Vagina (tissue), 2 donors: ENCODE measurements at regions of chr17 and their contacts with region 1.

Region 1: DNA sequence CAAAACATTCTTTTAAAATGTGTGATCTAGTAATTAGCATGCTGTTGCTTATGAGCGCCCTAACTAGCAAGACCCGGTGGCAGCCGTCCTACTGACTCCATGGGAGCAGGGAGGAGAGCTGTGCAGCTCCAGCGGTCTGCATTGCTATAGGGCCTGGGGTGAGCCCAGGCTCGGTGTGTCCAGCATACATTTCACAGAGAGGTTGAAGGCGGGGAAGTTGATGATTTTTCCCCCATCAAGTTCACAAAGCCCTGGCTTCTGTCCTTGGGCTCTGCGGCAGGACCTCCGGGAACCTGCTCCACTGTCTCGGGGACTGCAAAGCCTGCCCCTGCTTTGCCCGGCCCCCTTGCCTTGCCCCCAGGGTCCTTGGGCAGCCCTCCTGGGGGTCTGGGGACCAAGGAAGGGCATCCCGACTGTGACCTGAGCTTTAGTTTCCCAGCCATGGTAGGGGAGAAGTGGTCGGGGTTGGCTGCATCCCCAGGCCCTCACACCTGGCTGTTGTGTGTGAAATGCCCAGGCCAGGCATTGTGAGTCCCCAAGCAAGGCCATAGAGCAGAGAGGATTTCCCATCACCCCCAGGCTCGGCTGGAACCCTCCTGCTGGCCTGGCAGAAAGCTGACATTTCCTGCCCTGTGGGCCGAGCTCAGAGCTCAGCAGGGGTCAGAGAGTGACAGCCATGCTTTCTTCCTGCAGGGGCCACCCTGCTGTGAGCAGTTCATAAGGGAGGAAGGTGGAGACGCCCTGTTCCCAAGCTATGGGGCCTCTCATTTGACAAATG is 24.8 kb downstream of the KCNJ12 start:
- DNase-seq: no peak
- H3K4me3 ChIP-seq: no peak overlapping the region
- H3K27ac ChIP-seq: peak overlapping the region; percentile 80
- H3K4me1 ChIP-seq: peaks cover 29% of the 10 kb centered on the region
- H3K27me3 ChIP-seq: no peaks in the 10 kb centered on the region
- CTCF ChIP-seq: no peak
- POLR2A ChIP-seq: no peak

Region 2: DNA sequence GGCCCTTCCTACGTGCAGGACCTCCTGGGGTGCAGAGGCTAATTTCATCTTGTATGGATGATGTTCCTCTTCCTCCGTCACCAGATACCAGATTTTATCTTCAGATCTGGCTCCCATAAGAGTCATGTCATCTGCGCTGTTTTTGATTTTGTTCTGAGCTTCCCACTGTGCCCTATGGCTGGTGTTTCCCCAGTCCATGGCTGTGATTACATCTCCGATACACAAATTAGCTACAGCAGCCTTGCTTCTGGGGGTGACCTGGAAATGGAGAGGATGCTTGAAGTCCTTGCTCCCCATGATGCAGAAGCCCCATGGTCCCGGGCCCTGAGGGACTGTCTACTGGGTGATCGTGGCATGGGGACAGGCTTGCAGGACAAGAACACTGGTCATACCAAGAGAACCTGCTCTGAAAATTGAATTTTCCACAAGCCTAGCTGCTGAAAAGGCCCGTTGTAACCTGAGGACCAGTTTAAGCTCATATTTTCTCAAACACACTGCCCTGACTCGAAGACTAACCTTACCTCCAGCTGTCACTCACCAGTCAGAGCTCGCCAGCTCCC is 44.2 kb after region 1 on chr17:
- intact Hi-C with region 1: no loop called
- DNase-seq: peak in 1 of 2 donors; percentile 69
- H3K4me3 ChIP-seq: no peak overlapping the region
- H3K27ac ChIP-seq: no peak overlapping the region
- H3K4me1 ChIP-seq: no peaks in the 10 kb centered on the region
- H3K27me3 ChIP-seq: no peaks in the 10 kb centered on the region
- CTCF ChIP-seq: no peak
- POLR2A ChIP-seq: no peak

Region 3: DNA sequence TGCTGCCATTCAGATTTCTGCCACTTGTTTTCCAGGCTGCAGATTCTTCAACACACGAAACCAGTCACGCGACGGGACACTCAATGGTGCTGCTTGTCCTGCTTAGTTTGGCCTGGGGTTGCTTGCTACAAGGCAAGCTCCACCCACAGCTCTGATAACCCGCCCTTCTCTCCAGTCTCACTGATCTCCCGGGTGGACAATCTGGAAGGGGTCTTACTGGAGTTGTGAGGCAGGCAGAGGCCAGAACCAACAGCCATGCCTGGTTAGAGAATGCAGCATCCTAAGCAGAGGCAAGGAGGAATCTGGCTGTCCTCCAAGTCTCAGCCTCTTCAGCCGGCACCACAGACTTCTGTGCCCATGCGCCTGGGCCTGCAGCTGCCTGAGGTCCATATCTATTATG is 94.3 kb after region 1 on chr17:
- intact Hi-C with region 1: no loop called
- DNase-seq: peak in 1 of 2 donors; percentile 56
- H3K4me3 ChIP-seq: no peak overlapping the region
- H3K27ac ChIP-seq: no peak overlapping the region
- H3K4me1 ChIP-seq: no peaks in the 10 kb centered on the region
- H3K27me3 ChIP-seq: no peaks in the 10 kb centered on the region
- CTCF ChIP-seq: no peak
- POLR2A ChIP-seq: no peak

Region 4: DNA sequence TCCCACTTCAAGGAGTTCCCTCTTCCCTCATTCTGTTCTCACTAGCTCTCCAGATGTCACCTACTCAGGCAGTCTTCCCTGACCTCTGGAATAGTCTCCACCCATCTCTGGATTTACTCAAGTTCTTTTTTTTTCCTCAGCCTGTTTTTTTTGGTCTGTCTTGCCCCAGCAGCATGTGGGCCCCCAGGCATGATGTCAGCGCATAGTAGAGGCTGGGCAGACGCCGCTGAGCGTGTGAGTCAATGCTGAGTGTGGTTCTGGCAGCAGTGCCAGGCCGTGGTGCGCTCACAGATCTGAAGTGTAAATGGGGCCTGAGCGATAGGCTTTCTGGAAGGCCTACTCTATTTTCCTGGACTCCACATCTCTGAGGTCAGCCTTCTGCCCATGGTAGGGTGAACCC is 288.6 kb after region 1 on chr17:
- intact Hi-C with region 1: loop called (anchors 5 kb)
- DNase-seq: no peak
- H3K4me3 ChIP-seq: no peak overlapping the region
- H3K27ac ChIP-seq: no peak overlapping the region
- H3K4me1 ChIP-seq: no peaks in the 10 kb centered on the region
- H3K27me3 ChIP-seq: no peaks in the 10 kb centered on the region
- CTCF ChIP-seq: no peak
- POLR2A ChIP-seq: no peak